H1 (cell line): ENCODE measurements at regions of chr17 and their contacts with region 1.

Region 1: DNA sequence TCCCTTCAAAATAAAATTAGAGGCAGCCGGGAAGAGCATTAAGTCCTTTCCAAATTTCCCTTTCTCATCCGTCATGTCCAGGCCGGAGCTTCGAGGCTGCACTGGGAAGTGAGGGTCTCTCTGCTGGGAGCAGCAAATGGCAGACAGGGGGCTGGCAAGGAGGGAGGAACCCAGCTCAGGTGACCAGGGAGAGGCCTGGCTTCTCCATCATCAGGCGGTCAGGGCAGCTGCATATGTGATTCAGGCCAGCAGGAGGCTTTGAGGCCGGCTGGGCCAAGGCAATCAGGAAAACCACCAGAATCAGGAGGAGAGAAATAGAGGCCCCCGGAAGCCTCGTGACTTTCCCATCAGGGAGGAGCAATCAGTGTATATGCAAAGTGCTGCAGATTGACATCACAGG is 85.0 kb upstream of the RPL38 start:
- DNase-seq: peak; percentile 54 to 74
- H3K4me3 ChIP-seq: no peak overlapping the region
- H3K27ac ChIP-seq: no peak overlapping the region
- H3K4me1 ChIP-seq: peaks cover 17 to 36% (median 29%) of the 10 kb centered on the region in 4 experiments
- H3K27me3 ChIP-seq: no peaks in the 10 kb centered on the region; a peak in 1 of 7 replicates
- CTCF ChIP-seq: peak; percentile 52 to 71 (median 66)
- EP300 ChIP-seq: no peak
- POLR2A ChIP-seq: no peak
- RAD21 ChIP-seq: peak; percentile 27 to 59; a peak in 3 of 4 replicates

Region 2: DNA sequence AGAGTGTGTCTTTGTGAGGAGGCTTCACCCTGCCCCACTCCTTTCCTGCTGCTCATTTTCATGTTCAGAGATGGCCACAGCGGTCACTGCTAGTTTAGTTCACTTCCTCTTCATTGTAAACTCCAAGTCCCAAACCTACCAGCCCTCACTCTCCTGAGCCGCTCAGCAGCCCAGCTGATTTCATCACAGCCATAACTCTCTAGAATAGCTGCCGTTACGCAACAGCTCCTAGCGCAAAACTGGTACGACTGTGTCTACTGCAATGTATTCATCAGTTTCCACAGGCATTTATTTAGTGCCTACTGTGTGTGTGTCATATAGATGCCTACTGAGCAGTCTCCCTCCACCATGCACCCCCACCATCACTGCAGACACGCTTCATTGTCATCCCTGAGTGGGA is 148.5 kb before region 1 on chr17:
- CTCF ChIA-PET with region 1: no interaction called
- POLR2A ChIA-PET with region 1: no interaction called
- DNase-seq: no peak
- H3K4me3 ChIP-seq: no peak overlapping the region
- H3K27ac ChIP-seq: no peak overlapping the region
- H3K4me1 ChIP-seq: peaks cover 0 to 11% (median 6%) of the 10 kb centered on the region in 4 experiments; a peak in 6 of 7 replicates
- H3K27me3 ChIP-seq: no peaks in the 10 kb centered on the region
- CTCF ChIP-seq: no peak
- EP300 ChIP-seq: no peak
- POLR2A ChIP-seq: no peak
- RAD21 ChIP-seq: no peak

Region 3: DNA sequence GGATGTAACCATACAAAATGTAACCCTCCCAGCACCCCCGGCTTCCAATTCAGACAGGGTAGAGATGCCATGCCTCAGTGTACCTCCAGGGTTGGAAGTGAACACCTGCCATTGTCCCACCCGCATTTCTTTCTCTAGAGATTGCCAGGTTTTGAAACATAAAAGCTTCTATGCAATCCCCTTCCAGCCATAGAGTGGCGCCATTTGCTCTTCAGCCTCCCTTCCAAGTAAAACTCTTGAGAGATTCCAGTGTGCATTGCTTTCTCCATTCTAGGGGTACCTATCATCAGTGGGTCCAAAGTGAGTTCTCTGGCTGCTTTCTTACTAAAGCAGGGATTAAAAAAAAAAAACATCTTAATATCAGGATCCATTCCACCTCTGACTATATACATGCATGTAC is 48.1 kb before region 1 on chr17:
- CTCF ChIA-PET with region 1: interaction called, 13 read pairs
- POLR2A ChIA-PET with region 1: no interaction called
- DNase-seq: no peak
- H3K4me3 ChIP-seq: no peak overlapping the region
- H3K27ac ChIP-seq: no peak overlapping the region
- H3K4me1 ChIP-seq: no peaks in the 10 kb centered on the region
- H3K27me3 ChIP-seq: no peaks in the 10 kb centered on the region
- CTCF ChIP-seq: peak in 2 of 3 experiments; percentile 25 to 49; a peak in 2 of 4 replicates
- EP300 ChIP-seq: no peak
- POLR2A ChIP-seq: no peak
- RAD21 ChIP-seq: peak; percentile 39 to 61

Region 4: GRCh38 chr17:74099442-74100340 is 18.8 kb before region 1 on chr17:
- CTCF ChIA-PET with region 1: interaction called, 44 read pairs
- POLR2A ChIA-PET with region 1: no interaction called
- DNase-seq: no peak
- H3K4me3 ChIP-seq: no peak overlapping the region
- H3K27ac ChIP-seq: no peak overlapping the region
- H3K4me1 ChIP-seq: peaks cover 0 to 7% (median 4%) of the 10 kb centered on the region in 4 experiments; a peak in 3 of 7 replicates
- H3K27me3 ChIP-seq: no peaks in the 10 kb centered on the region
- CTCF ChIP-seq: no peak
- EP300 ChIP-seq: no peak
- POLR2A ChIP-seq: no peak
- RAD21 ChIP-seq: no peak

Region 5: DNA sequence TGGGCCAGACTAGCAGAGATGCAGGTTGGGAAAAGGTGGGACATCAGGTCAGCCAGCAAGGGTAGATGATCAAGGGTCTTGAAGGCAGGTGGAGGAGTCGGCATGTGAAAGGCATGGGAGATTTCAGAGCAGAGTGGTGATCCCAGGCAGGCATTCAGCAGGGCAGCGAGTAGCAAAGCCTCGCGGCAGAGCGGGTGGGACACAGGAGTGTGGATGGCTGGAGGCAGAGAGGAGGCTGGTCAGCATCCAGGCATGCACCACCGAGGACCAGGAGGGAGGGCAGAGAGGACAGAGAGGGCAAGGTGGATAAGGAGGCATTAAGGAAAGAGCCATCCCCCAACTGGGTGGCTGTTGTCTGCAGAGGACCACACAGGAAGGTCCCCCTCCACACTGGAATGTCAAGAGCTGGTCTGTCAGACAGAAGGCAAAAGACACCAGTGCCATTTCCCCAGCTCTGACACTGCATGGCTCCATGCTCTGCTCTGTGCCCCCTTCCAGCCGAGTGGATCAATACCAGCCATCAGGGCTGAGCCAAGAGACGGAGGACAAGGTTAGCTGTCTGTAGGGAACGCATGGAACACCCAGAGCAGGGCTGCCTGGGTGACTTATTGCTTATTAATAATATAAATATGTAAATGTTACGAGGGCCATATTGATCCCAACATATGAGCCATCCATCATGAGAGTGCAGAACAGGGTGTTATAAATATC is 10.2 kb after region 1 on chr17:
- CTCF ChIA-PET with region 1: interaction called, 20 read pairs
- POLR2A ChIA-PET with region 1: no interaction called
- DNase-seq: no peak
- H3K4me3 ChIP-seq: no peak overlapping the region
- H3K27ac ChIP-seq: no peak overlapping the region
- H3K4me1 ChIP-seq: peaks cover 0 to 1% (median 0%) of the 10 kb centered on the region in 4 experiments; a peak in 2 of 7 replicates
- H3K27me3 ChIP-seq: no peaks in the 10 kb centered on the region
- CTCF ChIP-seq: no peak
- EP300 ChIP-seq: no peak
- POLR2A ChIP-seq: no peak
- RAD21 ChIP-seq: no peak

Region 6: GRCh38 chr17:74152591-74153455 is 34.3 kb after region 1 on chr17:
- CTCF ChIA-PET with region 1: interaction called, 13 read pairs
- POLR2A ChIA-PET with region 1: interaction called, 3 read pairs
- DNase-seq: peak in 1 of 2 experiments; percentile 35
- H3K4me3 ChIP-seq: no peak overlapping the region
- H3K27ac ChIP-seq: no peak overlapping the region
- H3K4me1 ChIP-seq: peaks cover 0 to 9% (median 2%) of the 10 kb centered on the region in 4 experiments; a peak in 1 of 7 replicates
- H3K27me3 ChIP-seq: 0 out of 7 replicates have a peak, but pooled peaks cover 0 to 3% (median 0%) of the 10 kb centered on the region in 4 experiments
- CTCF ChIP-seq: no peak
- EP300 ChIP-seq: no peak
- POLR2A ChIP-seq: no peak
- RAD21 ChIP-seq: no peak

Region 7: GRCh38 chr17:74176546-74177001 is 58.1 kb after region 1 on chr17:
- CTCF ChIA-PET with region 1: interaction called, 36 read pairs
- POLR2A ChIA-PET with region 1: interaction called, 3 read pairs
- DNase-seq: peak; percentile 50 to 85
- H3K4me3 ChIP-seq: no peak overlapping the region
- H3K27ac ChIP-seq: no peak overlapping the region
- H3K4me1 ChIP-seq: 0 out of 7 replicates have a peak, but pooled peaks cover 0 to 4% (median 0%) of the 10 kb centered on the region in 4 experiments
- H3K27me3 ChIP-seq: 0 out of 7 replicates have a peak, but pooled peaks cover 0 to 1% (median 0%) of the 10 kb centered on the region in 4 experiments
- CTCF ChIP-seq: peak; percentile 86 to 97 (median 95)
- EP300 ChIP-seq: no peak
- POLR2A ChIP-seq: no peak
- RAD21 ChIP-seq: peak; percentile 99 to 100

Region 8: GRCh38 chr17:74182041-74182723 is 63.7 kb after region 1 on chr17:
- CTCF ChIA-PET with region 1: interaction called, 36 read pairs
- POLR2A ChIA-PET with region 1: interaction called, 3 read pairs
- DNase-seq: no peak
- H3K4me3 ChIP-seq: no peak overlapping the region
- H3K27ac ChIP-seq: no peak overlapping the region
- H3K4me1 ChIP-seq: 0 out of 7 replicates have a peak, but pooled peaks cover 0 to 4% (median 0%) of the 10 kb centered on the region in 4 experiments
- H3K27me3 ChIP-seq: no peaks in the 10 kb centered on the region
- CTCF ChIP-seq: no peak
- EP300 ChIP-seq: no peak
- POLR2A ChIP-seq: no peak
- RAD21 ChIP-seq: no peak